ENCODE measurements at regions of chr7 and their contacts with region 1.

Region 1: GRCh38 chr7:91089382-91089963 is 174.8 kb upstream of the FZD1 start:
- DNase-seq: peak; percentile 57
- ATAC-seq: peak; percentile 58
- H3K4me3 ChIP-seq: no peak overlapping the region
- H3K4me3 Mint-ChIP-seq: peak overlapping the region; percentile 21
- H3K27ac ChIP-seq: no peak overlapping the region
- H3K27ac Mint-ChIP-seq: no peak overlapping the region
- H3K4me1 ChIP-seq: peaks cover 0 to 4% of the 10 kb centered on the region in 2 donors
- H3K4me1 Mint-ChIP-seq: peaks cover 7% of the 10 kb centered on the region
- H3K27me3 ChIP-seq: no peaks in the 10 kb centered on the region
- H3K27me3 Mint-ChIP-seq: no peaks in the 10 kb centered on the region
- CTCF ChIP-seq: peak; percentile 95

Region 2: GRCh38 chr7:91201442-91202113 is 112.1 kb after region 1 on chr7:
- CTCF ChIA-PET with region 1: no interaction called
- POLR2A ChIA-PET with region 1: no interaction called
- intact Hi-C with region 1: no loop called
- DNase-seq: no peak
- ATAC-seq: no peak
- H3K4me3 ChIP-seq: no peak overlapping the region
- H3K4me3 Mint-ChIP-seq: no peak overlapping the region
- H3K27ac ChIP-seq: no peak overlapping the region
- H3K27ac Mint-ChIP-seq: peak overlapping the region; percentile 34
- H3K4me1 ChIP-seq: no peaks in the 10 kb centered on the region
- H3K4me1 Mint-ChIP-seq: peaks cover 5% of the 10 kb centered on the region
- H3K27me3 ChIP-seq: no peaks in the 10 kb centered on the region
- H3K27me3 Mint-ChIP-seq: no peaks in the 10 kb centered on the region
- CTCF ChIP-seq: no peak

Region 3: DNA sequence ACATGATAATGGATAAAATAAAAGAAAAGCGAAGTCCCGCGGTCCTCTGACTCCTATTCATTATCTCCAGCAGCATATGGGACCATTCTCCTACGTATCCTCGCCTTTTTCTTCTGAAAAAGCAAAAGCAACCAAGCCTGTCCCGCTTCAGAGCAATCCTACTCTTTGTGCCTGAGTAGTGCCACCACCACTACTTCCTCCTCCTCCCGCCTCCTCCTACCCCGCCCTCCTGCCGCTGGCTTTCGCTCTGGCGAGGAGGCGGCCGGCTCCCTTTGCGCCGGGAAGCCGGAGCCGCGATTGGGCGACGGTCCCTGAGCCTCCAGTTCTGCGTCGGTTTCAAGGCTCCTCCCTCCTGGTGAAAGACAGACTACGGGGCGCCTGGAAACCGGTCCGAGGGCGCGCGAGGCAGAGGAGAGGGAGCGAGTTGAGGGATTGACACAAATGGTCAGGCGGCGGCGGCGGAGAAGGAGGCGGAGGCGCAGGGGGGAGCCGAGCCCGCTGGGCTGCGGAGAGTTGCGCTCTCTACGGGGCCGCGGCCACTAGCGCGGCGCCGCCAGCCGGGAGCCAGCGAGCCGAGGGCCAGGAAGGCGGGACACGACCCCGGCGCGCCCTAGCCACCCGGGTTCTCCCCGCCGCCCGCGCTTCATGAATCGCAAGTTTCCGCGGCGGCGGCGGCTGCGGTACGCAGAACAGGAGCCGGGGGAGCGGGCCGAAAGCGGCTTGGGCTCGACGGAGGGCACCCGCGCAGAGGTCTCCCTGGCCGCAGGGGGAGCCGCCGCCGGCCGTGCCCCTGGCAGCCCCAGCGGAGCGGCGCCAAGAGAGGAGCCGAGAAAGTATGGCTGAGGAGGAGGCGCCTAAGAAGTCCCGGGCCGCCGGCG is 174.8 kb after region 1 on chr7 and contains the start of gene FZD1:
- CTCF ChIA-PET with region 1: interaction called, 3 read pairs
- POLR2A ChIA-PET with region 1: no interaction called
- intact Hi-C with region 1: loop called (anchors 10 kb)
- DNase-seq: peak; percentile 62
- ATAC-seq: peak; percentile 78
- H3K4me3 ChIP-seq: peak within 1 kb of the TSS; percentile 41 to 76 (median 57)
- H3K4me3 Mint-ChIP-seq: peak within 1 kb of the TSS; percentile 94
- H3K27ac ChIP-seq: no peak within 1 kb of the TSS
- H3K27ac Mint-ChIP-seq: peak within 1 kb of the TSS; percentile 53
- H3K4me1 ChIP-seq: peaks cover 24 to 25% of the 10 kb centered on the region in 2 donors
- H3K4me1 Mint-ChIP-seq: peaks cover 24% of the 10 kb centered on the region
- H3K27me3 ChIP-seq: peaks cover 0 to 45% (median 27%) of the 10 kb centered on the region in 4 experiments
- H3K27me3 Mint-ChIP-seq: peaks cover 50% of the 10 kb centered on the region
- CTCF ChIP-seq: no peak
- total RNA-seq, gene FZD1: 0.49 and 0.56 TPM in 2 replicates

Measured in B cell (primary cell).